Natural killer cell (primary cell): ENCODE measurements at regions of chr20 and their contacts with region 1.

Region 1: DNA sequence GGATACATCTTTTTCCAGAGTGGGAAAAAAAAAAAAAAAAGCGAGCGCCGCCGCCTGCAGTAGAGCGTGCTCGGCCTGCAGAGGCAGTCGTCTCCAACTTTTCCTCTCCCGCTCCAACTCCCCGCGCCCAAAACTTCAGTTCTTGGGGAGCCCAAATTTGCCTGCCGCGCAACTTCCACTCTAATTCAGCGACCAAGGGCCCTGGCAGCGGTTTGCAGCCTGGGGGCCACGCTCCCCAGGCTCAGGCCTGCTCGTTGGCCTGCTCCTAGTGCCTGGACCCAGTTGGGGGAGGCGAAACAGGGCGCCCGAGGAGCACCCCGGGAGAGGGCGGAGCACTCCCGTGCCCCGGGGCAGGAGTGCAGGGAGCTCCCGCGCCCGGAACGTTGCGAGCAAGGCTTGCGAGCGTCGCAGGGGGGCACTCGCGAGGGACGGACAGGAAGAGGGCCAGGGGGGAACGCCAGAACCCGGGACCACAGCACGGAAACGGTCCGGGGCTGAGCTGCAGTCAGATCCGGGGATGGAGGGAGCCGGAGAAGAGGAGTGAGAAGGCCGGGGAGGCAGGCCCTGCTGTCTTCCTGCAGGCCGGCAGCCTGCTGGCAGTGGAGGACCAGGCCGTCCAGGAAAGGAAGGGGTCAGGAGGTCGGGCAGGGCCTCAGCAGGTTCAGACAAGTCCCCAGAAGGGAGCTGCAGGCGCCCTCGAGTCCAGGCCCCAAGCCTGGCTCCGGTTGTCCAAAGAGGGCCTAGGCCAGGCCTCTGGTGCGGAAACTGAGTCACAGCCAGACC is at the start of gene STX16:
- DNase-seq: peak; percentile 78 to 95
- ATAC-seq: peak; percentile 68 to 84 (median 79)
- H3K4me3 ChIP-seq: peak within 1 kb of the TSS; percentile 91
- H3K4me3 Mint-ChIP-seq: peak within 1 kb of the TSS; percentile 97
- H3K27ac ChIP-seq: peak within 1 kb of the TSS; percentile 81
- H3K27ac Mint-ChIP-seq: peak within 1 kb of the TSS; percentile 94 to 98
- H3K4me1 ChIP-seq: peaks cover 14% of the 10 kb centered on the region
- H3K4me1 Mint-ChIP-seq: peaks cover 33 to 36% of the 10 kb centered on the region in 2 donors
- H3K27me3 ChIP-seq: no peaks in the 10 kb centered on the region
- H3K27me3 Mint-ChIP-seq: no peaks in the 10 kb centered on the region
- CTCF ChIP-seq: peak; percentile 62
- total RNA-seq, gene STX16: 136 to 146 (median 143) TPM

Region 2: DNA sequence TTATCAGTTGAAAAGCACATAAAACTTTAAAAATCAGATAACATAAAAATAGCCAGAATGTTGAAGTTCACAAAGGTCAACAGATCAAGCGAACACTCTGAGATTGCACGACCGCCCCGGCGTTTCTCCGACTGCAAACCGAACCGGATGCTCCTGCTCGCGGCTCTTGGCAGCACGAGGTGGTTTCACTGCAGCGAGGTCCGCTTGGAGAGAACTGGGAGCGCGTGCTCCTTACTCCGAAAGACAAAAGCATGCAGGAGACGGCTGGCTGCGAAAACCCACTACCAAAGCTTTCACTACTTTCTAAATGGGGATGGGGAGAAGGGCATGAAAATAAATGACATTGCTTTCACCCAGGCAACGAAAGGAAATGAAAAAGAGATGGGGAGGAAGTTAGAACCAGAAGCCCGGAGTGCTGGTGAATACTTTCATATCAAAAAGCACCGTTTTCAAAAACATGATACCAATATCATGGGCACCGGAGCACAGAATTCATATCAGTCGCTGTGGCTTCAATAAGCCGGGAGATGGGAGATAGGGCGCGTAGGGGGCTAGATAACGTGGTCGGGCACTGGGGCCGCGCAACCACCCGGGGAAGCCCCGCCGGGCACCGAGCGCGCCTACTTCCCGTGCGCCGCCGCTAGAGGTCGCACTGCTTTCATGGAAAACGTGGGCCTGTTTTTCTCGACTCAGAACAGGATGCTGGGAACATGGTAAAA is 414.2 kb before region 1 on chr20:
- intact Hi-C with region 1: loop called (anchors 5 kb)
- DNase-seq: peak; percentile 78 to 89
- ATAC-seq: peak; percentile 92 to 94 (median 93)
- H3K4me3 ChIP-seq: peak overlapping the region; percentile 54
- H3K4me3 Mint-ChIP-seq: peak overlapping the region; percentile 92
- H3K27ac ChIP-seq: peak overlapping the region; percentile 7
- H3K27ac Mint-ChIP-seq: peak overlapping the region; percentile 85 to 93
- H3K4me1 ChIP-seq: no peaks in the 10 kb centered on the region
- H3K4me1 Mint-ChIP-seq: peaks cover 12 to 14% of the 10 kb centered on the region in 2 donors
- H3K27me3 ChIP-seq: no peaks in the 10 kb centered on the region
- H3K27me3 Mint-ChIP-seq: no peaks in the 10 kb centered on the region
- CTCF ChIP-seq: peak; percentile 99

Region 3: GRCh38 chr20:58309575-58310290 is 341.2 kb before region 1 on chr20 and contains the start of gene RAB22A:
- intact Hi-C with region 1: loop called (anchors 2 kb)
- DNase-seq: peak; percentile 85 to 93
- ATAC-seq: peak; percentile 68 to 89 (median 73)
- H3K4me3 ChIP-seq: peak within 1 kb of the TSS; percentile 77
- H3K4me3 Mint-ChIP-seq: peak within 1 kb of the TSS; percentile 83
- H3K27ac ChIP-seq: peak within 1 kb of the TSS; percentile 87
- H3K27ac Mint-ChIP-seq: peak within 1 kb of the TSS; percentile 93 to 94
- H3K4me1 ChIP-seq: peaks cover 53% of the 10 kb centered on the region
- H3K4me1 Mint-ChIP-seq: peaks cover 45 to 48% of the 10 kb centered on the region in 2 donors
- H3K27me3 ChIP-seq: no peaks in the 10 kb centered on the region
- H3K27me3 Mint-ChIP-seq: no peaks in the 10 kb centered on the region
- CTCF ChIP-seq: no peak
- total RNA-seq, gene RAB22A: 19.6 to 29.8 (median 28.6) TPM

Region 4: DNA sequence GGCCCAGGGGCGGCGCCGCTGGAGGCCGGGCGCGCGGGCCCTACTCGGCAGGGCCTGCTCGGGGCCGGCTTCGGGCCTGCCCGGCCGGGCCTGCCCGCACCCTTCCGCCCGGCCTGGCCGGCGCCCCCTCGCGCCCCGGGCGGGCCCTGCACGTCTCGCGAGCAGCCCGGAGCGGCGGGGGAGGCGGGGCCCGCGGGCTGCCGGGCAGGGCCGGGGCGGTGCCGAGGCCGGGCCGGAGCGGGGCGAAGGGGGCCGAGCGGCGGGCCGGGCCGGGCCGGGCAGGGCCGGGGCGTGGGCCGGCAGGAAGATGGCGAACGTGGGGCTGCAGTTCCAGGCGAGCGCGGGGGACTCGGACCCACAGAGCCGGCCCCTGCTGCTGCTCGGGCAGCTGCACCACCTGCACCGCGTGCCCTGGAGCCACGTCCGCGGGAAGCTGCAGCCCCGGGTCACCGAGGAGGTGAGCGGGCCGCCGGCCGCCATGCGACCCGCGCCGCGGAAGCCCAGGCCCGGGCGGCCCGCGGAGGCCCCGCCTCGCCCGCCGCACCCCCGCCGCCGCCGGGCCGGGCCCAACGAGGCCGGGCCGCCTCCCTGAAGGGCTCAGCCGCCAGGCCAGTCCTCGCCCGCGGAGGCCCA is 41.7 kb after region 1 on chr20 and contains the start of gene NPEPL1:
- intact Hi-C with region 1: loop called (anchors 2 kb)
- DNase-seq: peak; percentile 73 to 83
- ATAC-seq: peak; percentile 94 to 96 (median 96)
- H3K4me3 ChIP-seq: peak within 1 kb of the TSS; percentile 25
- H3K4me3 Mint-ChIP-seq: peak within 1 kb of the TSS; percentile 77
- H3K27ac ChIP-seq: peak within 1 kb of the TSS; percentile 81
- H3K27ac Mint-ChIP-seq: peak within 1 kb of the TSS; percentile 80 to 86
- H3K4me1 ChIP-seq: peaks cover 22% of the 10 kb centered on the region
- H3K4me1 Mint-ChIP-seq: peaks cover under 1 to 7% of the 10 kb centered on the region in 2 donors
- H3K27me3 ChIP-seq: no peaks in the 10 kb centered on the region
- H3K27me3 Mint-ChIP-seq: no peaks in the 10 kb centered on the region
- CTCF ChIP-seq: no peak
- total RNA-seq, gene NPEPL1: 66.0 to 83.7 (median 68.4) TPM

Region 5: DNA sequence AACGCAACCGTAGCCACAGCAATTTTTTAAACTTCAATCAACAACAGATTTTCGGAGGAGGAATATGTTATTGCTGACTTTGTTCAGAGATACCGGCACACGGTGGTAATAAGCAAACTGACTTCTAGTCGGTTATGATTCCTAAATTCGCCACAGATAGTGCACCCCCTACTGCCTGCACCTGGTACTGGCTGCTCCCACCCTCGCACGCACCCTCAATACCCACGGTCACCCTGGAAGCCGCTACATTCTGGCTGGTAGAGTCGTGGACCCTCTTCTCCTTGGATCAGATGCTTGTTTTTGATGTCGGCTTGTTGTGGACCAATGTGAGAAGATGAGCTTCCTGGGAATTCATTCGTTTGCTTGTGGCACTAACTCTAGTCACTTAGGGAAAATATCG is 52.3 kb after region 1 on chr20:
- intact Hi-C with region 1: no loop called
- DNase-seq: peak in 1 of 2 donors; percentile 26
- ATAC-seq: no peak
- H3K4me3 ChIP-seq: no peak overlapping the region
- H3K4me3 Mint-ChIP-seq: no peak overlapping the region
- H3K27ac ChIP-seq: no peak overlapping the region
- H3K27ac Mint-ChIP-seq: no peak overlapping the region
- H3K4me1 ChIP-seq: no peaks in the 10 kb centered on the region
- H3K4me1 Mint-ChIP-seq: peaks cover 11 to 13% of the 10 kb centered on the region in 2 donors
- H3K27me3 ChIP-seq: no peaks in the 10 kb centered on the region
- H3K27me3 Mint-ChIP-seq: no peaks in the 10 kb centered on the region
- CTCF ChIP-seq: no peak

Region 6: GRCh38 chr20:58850693-58851174 is 199.8 kb after region 1 on chr20 and contains the start of gene GNAS-AS1:
- intact Hi-C with region 1: loop called (anchors 5 kb)
- DNase-seq: peak; percentile 64 to 82
- ATAC-seq: peak; percentile 74 to 94 (median 89)
- H3K4me3 ChIP-seq: peak within 1 kb of the TSS; percentile 43
- H3K4me3 Mint-ChIP-seq: peak within 1 kb of the TSS; percentile 91
- H3K27ac ChIP-seq: no peak within 1 kb of the TSS
- H3K27ac Mint-ChIP-seq: peak within 1 kb of the TSS; percentile 24 to 61
- H3K4me1 ChIP-seq: peaks cover 52% of the 10 kb centered on the region
- H3K4me1 Mint-ChIP-seq: peaks cover 0 to 32% of the 10 kb centered on the region in 2 donors
- H3K27me3 ChIP-seq: peaks cover 29% of the 10 kb centered on the region
- H3K27me3 Mint-ChIP-seq: peaks cover 45 to 68% of the 10 kb centered on the region in 2 donors
- CTCF ChIP-seq: no peak
- total RNA-seq, gene GNAS-AS1: 0.60 to 0.66 TPM in 2 of 3 donors, not detected in the other